ENCODE measurements at regions of chr17 and their contacts with region 1.

Region 1: GRCh38 chr17:50094753-50095619 is at the start of gene PDK2:
- DNase-seq: peak; percentile 92 to 99 (median 97)
- ATAC-seq: peak; percentile 98
- H3K4me3 ChIP-seq: peak within 1 kb of the TSS; percentile 92
- H3K4me3 Mint-ChIP-seq: peak within 1 kb of the TSS; percentile 91 to 100 (median 96)
- H3K27ac ChIP-seq: peak within 1 kb of the TSS; percentile 84
- H3K27ac Mint-ChIP-seq: peak within 1 kb of the TSS; percentile 87 to 98 (median 95)
- H3K4me1 ChIP-seq: peaks cover 12 to 14% of the 10 kb centered on the region in 2 donors
- H3K4me1 Mint-ChIP-seq: peaks cover 27 to 41% (median 32%) of the 10 kb centered on the region in 7 donors
- H3K27me3 ChIP-seq: no peaks in the 10 kb centered on the region
- H3K27me3 Mint-ChIP-seq: no peaks in the 10 kb centered on the region
- total RNA-seq, gene PDK2: 16.7 to 48.3 (median 22.5) TPM

Region 2: DNA sequence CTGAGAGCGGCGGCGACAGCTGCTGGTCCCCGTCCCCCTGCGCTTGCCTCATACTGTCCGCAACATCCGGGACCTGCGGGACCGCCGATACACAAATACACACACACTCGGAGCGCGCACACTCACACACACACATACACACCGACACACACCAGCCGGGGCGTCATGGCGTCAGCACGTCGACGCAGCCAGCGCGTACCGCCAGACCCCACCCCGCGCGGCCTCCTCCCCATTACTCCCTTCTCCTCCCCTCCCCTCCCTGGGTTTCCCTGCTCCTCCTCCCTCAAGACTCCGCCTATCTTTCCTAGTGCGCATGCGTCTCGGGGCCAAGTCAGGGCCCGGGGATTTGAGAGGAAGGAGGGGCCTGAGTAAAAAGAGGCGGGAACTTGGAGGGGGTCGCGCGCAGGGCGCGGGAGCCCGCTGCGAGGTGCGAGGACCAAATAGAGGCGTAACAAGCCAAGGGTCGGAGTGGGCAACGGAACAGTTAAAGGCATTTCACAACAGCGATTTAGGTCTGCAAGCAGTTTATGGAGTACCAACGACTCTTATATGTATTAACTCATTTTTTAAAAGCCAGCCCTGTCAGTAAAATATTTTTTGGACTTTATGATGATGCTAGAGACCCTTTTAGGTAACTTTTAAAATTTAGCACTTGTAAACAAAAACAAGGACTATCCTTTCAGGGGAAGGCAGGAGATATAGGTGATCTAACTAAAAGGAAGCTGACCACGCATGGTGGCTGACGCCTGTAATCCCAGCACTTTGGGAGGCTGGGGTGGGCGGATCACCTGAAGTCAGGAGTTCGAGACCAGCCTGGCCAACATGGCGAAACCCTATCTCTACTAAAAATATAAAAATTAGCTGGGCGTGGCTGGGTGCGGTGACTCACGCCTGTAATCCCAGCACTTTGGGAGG is 416.8 kb before region 1 on chr17 and contains the start of gene SPOP:
- CTCF ChIA-PET with region 1: no interaction called
- POLR2A ChIA-PET with region 1: no interaction called
- intact Hi-C with region 1: loop called (anchors 1 kb)
- DNase-seq: peak; percentile 94 to 100 (median 99)
- ATAC-seq: peak; percentile 98
- H3K4me3 ChIP-seq: peak within 1 kb of the TSS; percentile 88
- H3K4me3 Mint-ChIP-seq: peak within 1 kb of the TSS; percentile 88 to 98 (median 94)
- H3K27ac ChIP-seq: peak within 1 kb of the TSS; percentile 87
- H3K27ac Mint-ChIP-seq: peak within 1 kb of the TSS; percentile 94 to 100 (median 98)
- H3K4me1 ChIP-seq: peaks cover 25 to 26% of the 10 kb centered on the region in 2 donors
- H3K4me1 Mint-ChIP-seq: peaks cover 36 to 65% (median 47%) of the 10 kb centered on the region in 7 donors
- H3K27me3 ChIP-seq: no peaks in the 10 kb centered on the region
- H3K27me3 Mint-ChIP-seq: peaks cover 0 to 13% (median 0%) of the 10 kb centered on the region in 5 donors
- total RNA-seq, gene SPOP: 59.6 to 94.8 (median 80.9) TPM

Region 3: GRCh38 chr17:49830605-49831004 is 264.4 kb before region 1 on chr17:
- CTCF ChIA-PET with region 1: no interaction called
- POLR2A ChIA-PET with region 1: no interaction called
- intact Hi-C with region 1: no loop called
- DNase-seq: no peak
- ATAC-seq: no peak
- H3K4me3 ChIP-seq: no peak overlapping the region
- H3K4me3 Mint-ChIP-seq: no peak overlapping the region
- H3K27ac ChIP-seq: no peak overlapping the region
- H3K27ac Mint-ChIP-seq: peak overlapping the region in 3 of 9 donors; percentile 59 to 70 (median 63)
- H3K4me1 ChIP-seq: no peaks in the 10 kb centered on the region
- H3K4me1 Mint-ChIP-seq: peaks cover 0 to 21% (median 6%) of the 10 kb centered on the region in 7 donors
- H3K27me3 ChIP-seq: no peaks in the 10 kb centered on the region
- H3K27me3 Mint-ChIP-seq: no peaks in the 10 kb centered on the region

Region 4: GRCh38 chr17:49880291-49881053 is 214.5 kb before region 1 on chr17:
- CTCF ChIA-PET with region 1: no interaction called
- POLR2A ChIA-PET with region 1: no interaction called
- intact Hi-C with region 1: no loop called
- DNase-seq: peak; percentile 31 to 77 (median 58)
- ATAC-seq: peak; percentile 95
- H3K4me3 ChIP-seq: no peak overlapping the region
- H3K4me3 Mint-ChIP-seq: peak overlapping the region in 8 of 10 donors; percentile 21 to 74 (median 44)
- H3K27ac ChIP-seq: no peak overlapping the region
- H3K27ac Mint-ChIP-seq: no peak overlapping the region
- H3K4me1 ChIP-seq: peaks cover 3 to 7% of the 10 kb centered on the region in 2 donors
- H3K4me1 Mint-ChIP-seq: peaks cover 0 to 7% (median 5%) of the 10 kb centered on the region in 7 donors
- H3K27me3 ChIP-seq: peaks cover 4 to 9% of the 10 kb centered on the region in 2 donors
- H3K27me3 Mint-ChIP-seq: peaks cover 20 to 52% (median 43%) of the 10 kb centered on the region in 5 donors

Region 5: DNA sequence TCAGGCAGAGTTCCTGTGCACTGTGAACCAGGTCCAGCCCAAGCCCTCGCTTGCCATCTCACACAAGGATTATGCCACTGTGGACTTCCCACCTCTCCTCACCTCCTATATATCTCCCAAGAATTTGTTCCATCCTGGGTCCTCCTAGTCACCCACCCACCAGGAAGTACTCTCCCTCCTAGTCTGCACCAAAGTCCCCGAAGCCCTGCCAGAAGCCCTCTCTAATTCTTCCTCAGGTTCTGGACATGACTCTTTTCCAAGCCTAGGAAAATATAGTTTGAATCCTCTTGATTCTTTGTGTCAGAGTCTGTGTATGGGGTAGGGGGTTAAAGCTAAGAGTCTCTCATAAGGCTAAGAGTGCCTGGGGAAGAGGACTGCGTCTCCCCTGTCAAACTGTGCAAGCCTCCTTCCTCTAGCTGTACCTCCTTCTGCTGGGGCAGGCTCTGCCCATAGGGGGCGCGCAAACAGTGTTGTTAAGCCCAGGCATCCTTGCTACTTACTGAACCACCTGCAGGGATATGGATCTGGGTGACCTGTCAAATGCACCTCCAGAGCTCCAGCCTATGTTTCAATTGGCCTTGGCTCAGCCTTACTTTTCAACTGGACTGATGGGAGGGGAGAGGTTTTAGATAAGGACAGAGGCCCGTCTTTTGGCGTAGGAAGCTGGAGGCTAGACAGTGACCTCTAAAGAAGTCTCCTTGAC is 142.6 kb before region 1 on chr17:
- CTCF ChIA-PET with region 1: no interaction called
- POLR2A ChIA-PET with region 1: no interaction called
- intact Hi-C with region 1: loop called in 1 of 2 experiments (anchors 5 kb)
- DNase-seq: peak; percentile 62 to 82 (median 77)
- ATAC-seq: peak; percentile 95
- H3K4me3 ChIP-seq: no peak overlapping the region
- H3K4me3 Mint-ChIP-seq: no peak overlapping the region
- H3K27ac ChIP-seq: no peak overlapping the region
- H3K27ac Mint-ChIP-seq: no peak overlapping the region
- H3K4me1 ChIP-seq: no peaks in the 10 kb centered on the region
- H3K4me1 Mint-ChIP-seq: peaks cover 0 to 2% (median 0%) of the 10 kb centered on the region in 7 donors
- H3K27me3 ChIP-seq: no peaks in the 10 kb centered on the region
- H3K27me3 Mint-ChIP-seq: peaks cover 38 to 48% (median 40%) of the 10 kb centered on the region in 5 donors

Region 6: DNA sequence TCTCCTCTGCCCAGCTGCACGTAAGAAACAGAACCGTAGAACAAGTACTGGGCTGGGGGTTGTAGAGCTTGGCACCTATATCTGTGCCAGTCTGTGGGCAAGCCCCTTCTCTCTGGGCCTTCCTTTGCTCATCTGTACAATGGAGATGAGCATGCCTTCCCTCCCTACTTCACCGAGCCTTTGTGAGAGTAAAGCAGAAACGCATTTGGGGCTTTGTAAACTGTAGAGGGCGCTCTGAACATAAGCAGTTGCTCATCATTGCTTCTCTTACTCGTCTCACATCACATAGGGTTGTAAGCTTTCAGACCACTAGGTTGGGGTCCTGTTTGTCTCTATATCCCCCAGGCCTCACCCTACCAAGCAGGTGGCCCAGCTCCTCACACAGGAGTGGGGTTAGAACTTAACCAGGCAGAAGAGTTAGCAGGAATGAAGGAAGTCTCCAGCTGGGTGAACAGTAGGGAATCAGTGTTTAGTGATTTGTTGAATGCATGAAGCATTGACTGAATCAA is 19.9 kb after region 1 on chr17:
- CTCF ChIA-PET with region 1: interaction called, 12 read pairs
- POLR2A ChIA-PET with region 1: interaction called, 4 read pairs
- intact Hi-C with region 1: loop called in 1 of 2 experiments (anchors 1 kb)
- DNase-seq: peak in 6 of 9 donors; percentile 35 to 47 (median 41)
- ATAC-seq: peak; percentile 48
- H3K4me3 ChIP-seq: no peak overlapping the region
- H3K4me3 Mint-ChIP-seq: peak overlapping the region in 2 of 10 donors; percentile 5 to 32
- H3K27ac ChIP-seq: no peak overlapping the region
- H3K27ac Mint-ChIP-seq: peak overlapping the region in 2 of 9 donors; percentile 61 to 68
- H3K4me1 ChIP-seq: peaks cover 0 to 4% of the 10 kb centered on the region in 2 donors
- H3K4me1 Mint-ChIP-seq: peaks cover 7 to 18% (median 12%) of the 10 kb centered on the region in 7 donors
- H3K27me3 ChIP-seq: peaks cover 4 to 9% of the 10 kb centered on the region in 2 donors
- H3K27me3 Mint-ChIP-seq: peaks cover 14 to 44% (median 26%) of the 10 kb centered on the region in 5 donors

Region 7: GRCh38 chr17:50177983-50178834 is 83.2 kb after region 1 on chr17:
- CTCF ChIA-PET with region 1: interaction called, 7 read pairs
- POLR2A ChIA-PET with region 1: no interaction called
- intact Hi-C with region 1: loop called in 1 of 2 experiments (anchors 1 kb)
- DNase-seq: peak in 7 of 9 donors; percentile 23 to 47 (median 29)
- ATAC-seq: peak; percentile 91
- H3K4me3 ChIP-seq: no peak overlapping the region
- H3K4me3 Mint-ChIP-seq: peak overlapping the region in 9 of 10 donors; percentile 33 to 83 (median 73)
- H3K27ac ChIP-seq: no peak overlapping the region
- H3K27ac Mint-ChIP-seq: peak overlapping the region in 5 of 9 donors; percentile 38 to 91 (median 48)
- H3K4me1 ChIP-seq: peaks cover 0 to 4% of the 10 kb centered on the region in 2 donors
- H3K4me1 Mint-ChIP-seq: peaks cover 13 to 24% (median 20%) of the 10 kb centered on the region in 7 donors
- H3K27me3 ChIP-seq: no peaks in the 10 kb centered on the region
- H3K27me3 Mint-ChIP-seq: no peaks in the 10 kb centered on the region

Region 8: GRCh38 chr17:50190603-50191358 is 95.8 kb after region 1 on chr17:
- CTCF ChIA-PET with region 1: no interaction called
- POLR2A ChIA-PET with region 1: no interaction called
- intact Hi-C with region 1: no loop called
- DNase-seq: no peak
- ATAC-seq: no peak
- H3K4me3 ChIP-seq: no peak overlapping the region
- H3K4me3 Mint-ChIP-seq: no peak overlapping the region
- H3K27ac ChIP-seq: no peak overlapping the region
- H3K27ac Mint-ChIP-seq: no peak overlapping the region
- H3K4me1 ChIP-seq: no peaks in the 10 kb centered on the region
- H3K4me1 Mint-ChIP-seq: no peaks in the 10 kb centered on the region
- H3K27me3 ChIP-seq: no peaks in the 10 kb centered on the region
- H3K27me3 Mint-ChIP-seq: peaks cover 0 to 2% (median 0%) of the 10 kb centered on the region in 5 donors

Region 9: DNA sequence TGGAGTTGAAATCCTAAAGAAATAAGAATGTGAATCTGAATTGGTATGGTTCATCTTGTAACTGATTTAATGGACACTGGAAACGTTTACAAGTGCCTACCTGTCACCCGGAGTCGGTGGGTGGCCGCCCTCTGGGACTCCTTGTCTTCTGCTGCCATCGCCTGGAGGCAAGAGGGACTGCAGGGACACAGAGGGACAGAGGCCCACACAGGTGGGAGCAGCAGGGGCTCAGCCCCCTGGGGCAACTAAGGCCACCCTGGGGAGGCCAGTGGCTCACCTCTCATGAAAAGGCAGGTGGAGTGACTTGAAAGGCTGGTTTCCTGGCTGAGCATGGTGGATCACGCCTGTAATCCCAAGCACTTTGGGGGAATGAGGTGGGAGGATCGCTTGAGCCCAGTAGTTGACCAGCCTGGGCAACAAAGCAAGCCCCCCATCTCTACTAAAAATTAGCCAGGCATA is 202.4 kb after region 1 on chr17:
- CTCF ChIA-PET with region 1: interaction called, 25 read pairs
- POLR2A ChIA-PET with region 1: no interaction called
- intact Hi-C with region 1: loop called (anchors 1 kb)
- DNase-seq: peak; percentile 58 to 82 (median 76)
- ATAC-seq: peak; percentile 98
- H3K4me3 ChIP-seq: no peak overlapping the region
- H3K4me3 Mint-ChIP-seq: no peak overlapping the region
- H3K27ac ChIP-seq: no peak overlapping the region
- H3K27ac Mint-ChIP-seq: no peak overlapping the region
- H3K4me1 ChIP-seq: no peaks in the 10 kb centered on the region
- H3K4me1 Mint-ChIP-seq: peaks cover 0 to 10% (median 0%) of the 10 kb centered on the region in 7 donors
- H3K27me3 ChIP-seq: no peaks in the 10 kb centered on the region
- H3K27me3 Mint-ChIP-seq: peaks cover 0 to 14% (median 5%) of the 10 kb centered on the region in 5 donors

Region 10: GRCh38 chr17:50406578-50406977 is 311.6 kb after region 1 on chr17:
- CTCF ChIA-PET with region 1: no interaction called
- POLR2A ChIA-PET with region 1: no interaction called
- intact Hi-C with region 1: no loop called
- DNase-seq: no peak
- ATAC-seq: no peak
- H3K4me3 ChIP-seq: no peak overlapping the region
- H3K4me3 Mint-ChIP-seq: no peak overlapping the region
- H3K27ac ChIP-seq: no peak overlapping the region
- H3K27ac Mint-ChIP-seq: no peak overlapping the region
- H3K4me1 ChIP-seq: no peaks in the 10 kb centered on the region
- H3K4me1 Mint-ChIP-seq: peaks cover 0 to 2% (median 0%) of the 10 kb centered on the region in 7 donors
- H3K27me3 ChIP-seq: no peaks in the 10 kb centered on the region
- H3K27me3 Mint-ChIP-seq: peaks cover 6 to 30% (median 10%) of the 10 kb centered on the region in 5 donors

Measured in naive thymus-derived CD4-positive, alpha-beta T cell (primary cell).